SK-N-SH (cell line): ENCODE measurements at regions of chr10 and their contacts with region 1.

Region 1: DNA sequence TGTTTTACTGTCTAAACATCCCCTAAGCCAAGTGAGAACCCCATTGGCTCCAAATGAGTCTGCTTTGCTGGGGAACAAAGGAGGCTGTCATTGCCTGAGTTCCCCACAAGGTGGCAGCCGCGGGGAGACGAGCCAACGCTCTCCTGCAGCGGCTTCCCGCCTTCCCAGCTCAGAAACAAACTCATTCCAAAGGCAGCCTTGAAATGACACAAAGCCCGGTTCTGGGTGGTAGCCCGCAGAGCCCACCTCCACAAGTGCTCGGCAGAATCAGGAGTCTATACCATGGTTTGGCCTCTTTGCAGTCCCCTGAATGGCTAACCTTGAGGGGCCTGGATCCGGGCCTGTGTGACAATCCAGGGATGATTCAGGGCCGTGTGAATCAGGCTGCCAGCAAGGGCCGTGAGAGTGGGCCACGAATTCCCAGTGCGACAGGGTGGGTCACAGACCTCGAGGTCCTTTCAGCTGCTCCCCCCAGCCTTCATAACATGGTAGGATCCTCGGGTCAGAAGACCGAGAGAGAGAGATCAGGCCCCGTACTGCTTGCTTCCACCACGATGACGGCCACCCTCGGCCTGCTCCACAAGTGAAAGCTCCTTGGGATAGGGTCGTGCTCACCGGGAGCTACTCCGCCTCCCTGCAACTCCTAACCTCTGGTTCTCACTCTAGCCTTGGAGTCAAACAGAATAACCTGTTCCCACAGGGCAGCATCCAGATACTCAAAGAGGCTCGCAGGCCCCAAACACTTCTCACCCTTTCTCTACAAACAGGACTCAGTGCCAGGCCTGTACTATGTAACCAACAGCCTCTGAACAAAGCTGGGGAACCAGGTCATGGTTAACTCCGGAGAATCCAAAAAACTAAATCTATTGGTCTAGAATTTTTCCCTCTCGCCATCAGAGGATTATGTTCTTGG is 79.6 kb downstream of the DLG5 start:
- DNase-seq: peak; percentile 84
- H3K4me3 ChIP-seq: peak overlapping the region in 1 of 2 experiments; percentile 35; a peak in 1 of 4 replicates
- H3K27ac ChIP-seq: peak overlapping the region; percentile 63 to 87
- H3K4me1 ChIP-seq: peaks cover 16 to 35% of the 10 kb centered on the region in 2 experiments; a peak in 3 of 4 replicates
- H3K27me3 ChIP-seq: no peaks in the 10 kb centered on the region
- CTCF ChIP-seq: peak; percentile 94
- EP300 ChIP-seq: no peak
- RAD21 ChIP-seq: peak; percentile 91

Region 2: GRCh38 chr10:77622889-77623291 is 224.1 kb before region 1 on chr10:
- CTCF ChIA-PET with region 1: no interaction called
- POLR2A ChIA-PET with region 1: no interaction called
- DNase-seq: no peak
- H3K4me3 ChIP-seq: no peak overlapping the region
- H3K27ac ChIP-seq: no peak overlapping the region
- H3K4me1 ChIP-seq: no peaks in the 10 kb centered on the region
- H3K27me3 ChIP-seq: no peaks in the 10 kb centered on the region
- CTCF ChIP-seq: no peak
- EP300 ChIP-seq: no peak
- RAD21 ChIP-seq: no peak

Region 3: DNA sequence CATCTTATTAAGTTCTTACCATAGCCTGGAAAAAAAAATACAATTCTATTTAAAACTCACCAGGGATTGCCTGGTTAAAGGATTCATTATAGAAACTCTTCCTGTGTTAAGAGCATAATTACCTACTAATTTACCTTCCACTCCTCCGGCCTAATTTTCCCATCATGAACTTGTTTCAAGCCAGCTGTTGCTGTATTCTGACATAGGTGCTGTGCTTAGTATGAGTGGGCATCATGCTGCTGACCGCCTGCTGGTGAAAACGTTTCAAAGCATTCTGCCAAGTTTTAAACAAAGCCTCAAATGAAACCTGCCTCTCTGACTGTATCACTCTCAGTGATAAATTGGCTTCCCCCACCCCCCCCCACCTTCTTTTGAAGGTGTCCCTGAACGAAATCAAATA is 161.5 kb before region 1 on chr10:
- CTCF ChIA-PET with region 1: no interaction called
- POLR2A ChIA-PET with region 1: no interaction called
- DNase-seq: no peak
- H3K4me3 ChIP-seq: no peak overlapping the region
- H3K27ac ChIP-seq: no peak overlapping the region
- H3K4me1 ChIP-seq: no peaks in the 10 kb centered on the region; a peak in 1 of 4 replicates
- H3K27me3 ChIP-seq: peaks cover 16% of the 10 kb centered on the region; the same call in 1 of the 2 replicates
- CTCF ChIP-seq: no peak
- EP300 ChIP-seq: no peak
- RAD21 ChIP-seq: no peak

Region 4: GRCh38 chr10:77756319-77757232 is 90.4 kb before region 1 on chr10:
- CTCF ChIA-PET with region 1: no interaction called
- POLR2A ChIA-PET with region 1: no interaction called
- DNase-seq: peak; percentile 65
- H3K4me3 ChIP-seq: no peak overlapping the region; a peak in 1 of 4 replicates
- H3K27ac ChIP-seq: no peak overlapping the region
- H3K4me1 ChIP-seq: peaks cover 0 to 3% of the 10 kb centered on the region in 2 experiments; a peak in 1 of 4 replicates
- H3K27me3 ChIP-seq: no peaks in the 10 kb centered on the region
- CTCF ChIP-seq: peak; percentile 89
- EP300 ChIP-seq: no peak
- RAD21 ChIP-seq: peak; percentile 89

Region 5: DNA sequence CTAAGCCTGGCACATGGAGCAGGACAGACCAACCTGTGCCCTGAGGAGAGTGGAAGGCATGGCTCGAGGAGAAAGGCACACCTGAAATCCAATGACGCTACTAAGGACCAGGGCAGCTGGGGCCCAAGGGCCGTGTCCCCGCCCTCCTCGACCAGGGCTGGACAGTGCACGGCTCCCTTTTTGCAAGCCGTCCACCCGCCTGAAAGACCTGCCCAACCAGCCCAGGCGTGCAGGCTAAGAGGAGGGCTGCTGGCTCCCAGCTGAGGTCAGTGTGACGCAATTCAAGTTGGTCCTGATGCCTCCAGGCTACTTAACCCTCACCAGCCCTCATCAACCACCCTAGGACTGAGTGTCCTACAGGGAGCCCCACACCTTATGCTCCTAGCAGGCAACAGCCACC is 10.3 kb after region 1 on chr10:
- CTCF ChIA-PET with region 1: interaction called, 13 read pairs
- POLR2A ChIA-PET with region 1: no interaction called
- DNase-seq: no peak
- H3K4me3 ChIP-seq: no peak overlapping the region
- H3K27ac ChIP-seq: no peak overlapping the region; a peak in 1 of 4 replicates
- H3K4me1 ChIP-seq: peaks cover 0 to 2% of the 10 kb centered on the region in 2 experiments; a peak in 1 of 4 replicates
- H3K27me3 ChIP-seq: no peaks in the 10 kb centered on the region
- CTCF ChIP-seq: no peak
- EP300 ChIP-seq: no peak
- RAD21 ChIP-seq: no peak

Region 6: GRCh38 chr10:77865629-77866360 is 18.8 kb after region 1 on chr10:
- CTCF ChIA-PET with region 1: interaction called, 19 read pairs
- POLR2A ChIA-PET with region 1: interaction called, 3 read pairs
- DNase-seq: no peak
- H3K4me3 ChIP-seq: no peak overlapping the region
- H3K27ac ChIP-seq: peak overlapping the region in 1 of 2 experiments; percentile 81; a peak in 2 of 4 replicates
- H3K4me1 ChIP-seq: peaks cover 11 to 62% of the 10 kb centered on the region in 2 experiments
- H3K27me3 ChIP-seq: no peaks in the 10 kb centered on the region
- CTCF ChIP-seq: no peak
- EP300 ChIP-seq: no peak
- RAD21 ChIP-seq: no peak

Region 7: GRCh38 chr10:77926566-77927401 is 79.8 kb after region 1 on chr10 and contains the start of gene DLG5:
- CTCF ChIA-PET with region 1: interaction called, 10 read pairs
- POLR2A ChIA-PET with region 1: no interaction called
- DNase-seq: peak; percentile 92
- H3K4me3 ChIP-seq: peak within 1 kb of the TSS; percentile 85 to 90
- H3K27ac ChIP-seq: peak within 1 kb of the TSS; percentile 55 to 89; a peak in 3 of 4 replicates
- H3K4me1 ChIP-seq: peaks cover 11 to 30% of the 10 kb centered on the region in 2 experiments; a peak in 3 of 4 replicates
- H3K27me3 ChIP-seq: no peaks in the 10 kb centered on the region
- CTCF ChIP-seq: no peak
- EP300 ChIP-seq: no peak
- RAD21 ChIP-seq: no peak
- polyA plus RNA-seq, gene DLG5: 15.3 and 31.3 TPM in 2 replicates

Region 8: GRCh38 chr10:77974396-77975074 is 127.6 kb after region 1 on chr10:
- CTCF ChIA-PET with region 1: interaction called, 11 read pairs
- POLR2A ChIA-PET with region 1: no interaction called
- DNase-seq: peak; percentile 33
- H3K4me3 ChIP-seq: no peak overlapping the region
- H3K27ac ChIP-seq: no peak overlapping the region; a peak in 1 of 4 replicates
- H3K4me1 ChIP-seq: peaks cover 8 to 10% of the 10 kb centered on the region in 2 experiments; a peak in 3 of 4 replicates
- H3K27me3 ChIP-seq: no peaks in the 10 kb centered on the region
- CTCF ChIP-seq: peak; percentile 56
- EP300 ChIP-seq: no peak
- RAD21 ChIP-seq: peak; percentile 59

Region 9: GRCh38 chr10:77983384-77984341 is 136.7 kb after region 1 on chr10:
- CTCF ChIA-PET with region 1: interaction called, 16 read pairs
- POLR2A ChIA-PET with region 1: interaction called, 5 read pairs
- DNase-seq: peak; percentile 52
- H3K4me3 ChIP-seq: no peak overlapping the region
- H3K27ac ChIP-seq: peak overlapping the region; percentile 86 to 89
- H3K4me1 ChIP-seq: peaks cover 19 to 28% of the 10 kb centered on the region in 2 experiments; a peak in 3 of 4 replicates
- H3K27me3 ChIP-seq: no peaks in the 10 kb centered on the region
- CTCF ChIP-seq: no peak
- EP300 ChIP-seq: peak in 1 of 2 experiments; percentile 37; a peak in 1 of 4 replicates
- RAD21 ChIP-seq: peak; percentile 19

Region 10: DNA sequence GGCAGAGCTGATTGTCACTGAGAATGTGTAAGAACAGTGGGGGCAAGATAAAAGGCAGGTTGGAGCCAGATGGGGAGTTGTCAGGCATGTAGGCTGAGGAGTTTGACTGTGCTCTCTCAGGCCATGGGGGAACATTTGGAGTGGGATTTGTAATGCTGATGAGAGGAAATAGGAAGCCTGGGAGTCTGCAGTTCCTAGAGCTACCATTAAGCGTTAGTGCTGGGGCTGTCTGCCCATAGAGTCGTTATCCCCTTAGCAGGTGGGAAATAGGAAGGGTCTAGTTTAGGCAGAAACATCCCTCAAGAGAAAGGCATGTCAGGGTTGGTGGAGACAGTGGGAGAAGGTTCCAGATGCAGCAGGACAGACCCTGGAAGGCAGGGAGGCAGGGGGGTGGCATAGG is 262.2 kb after region 1 on chr10:
- CTCF ChIA-PET with region 1: no interaction called
- POLR2A ChIA-PET with region 1: no interaction called
- DNase-seq: no peak
- H3K4me3 ChIP-seq: no peak overlapping the region
- H3K27ac ChIP-seq: no peak overlapping the region
- H3K4me1 ChIP-seq: no peaks in the 10 kb centered on the region
- H3K27me3 ChIP-seq: no peaks in the 10 kb centered on the region; the same call in 1 of the 2 replicates
- CTCF ChIP-seq: no peak
- EP300 ChIP-seq: no peak
- RAD21 ChIP-seq: no peak